A673 (cell line): ENCODE measurements at regions of chr22 and their contacts with region 1.

Region 1: DNA sequence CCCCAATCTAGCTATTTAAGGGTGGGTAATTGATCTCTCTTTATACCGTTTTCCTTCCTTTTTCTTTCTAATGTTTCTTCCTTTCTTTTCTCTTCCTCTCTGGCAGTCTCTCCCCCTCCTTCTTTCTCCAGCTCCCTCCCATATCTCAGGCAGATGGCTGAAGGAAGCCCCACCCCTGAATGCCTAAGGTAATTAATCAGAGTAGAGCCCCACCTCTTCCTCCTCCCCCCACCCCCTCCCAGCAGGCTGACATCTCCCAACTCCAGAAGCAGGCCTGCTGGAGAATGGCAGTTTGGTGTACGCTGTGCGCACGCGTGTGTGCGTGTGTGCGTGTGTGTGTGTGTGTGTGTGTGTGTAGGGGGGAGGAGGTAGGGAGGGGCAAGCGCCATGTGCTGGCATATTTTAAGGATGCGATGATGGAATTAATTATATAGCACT is 122.6 kb downstream of the APOL5 start:
- DNase-seq: peak; percentile 99
- H3K4me3 ChIP-seq: peak overlapping the region; percentile 60
- H3K27ac ChIP-seq: peak overlapping the region; percentile 64
- H3K4me1 ChIP-seq: peaks cover 57% of the 10 kb centered on the region
- H3K27me3 ChIP-seq: no peaks in the 10 kb centered on the region
- CTCF ChIP-seq: no peak

Region 2: GRCh38 chr22:35467681-35468434 is 372.5 kb before region 1 on chr22:
- CTCF ChIA-PET with region 1: no interaction called
- POLR2A ChIA-PET with region 1: no interaction called
- intact Hi-C with region 1: no loop called
- DNase-seq: no peak
- H3K4me3 ChIP-seq: no peak overlapping the region
- H3K27ac ChIP-seq: no peak overlapping the region
- H3K4me1 ChIP-seq: no peaks in the 10 kb centered on the region
- H3K27me3 ChIP-seq: no peaks in the 10 kb centered on the region
- CTCF ChIP-seq: no peak

Region 3: GRCh38 chr22:35627264-35628041 is 212.9 kb before region 1 on chr22:
- CTCF ChIA-PET with region 1: interaction called, 3 read pairs
- POLR2A ChIA-PET with region 1: no interaction called
- intact Hi-C with region 1: loop called (anchors 5 kb)
- DNase-seq: peak; percentile 90
- H3K4me3 ChIP-seq: peak overlapping the region; percentile 49
- H3K27ac ChIP-seq: peak overlapping the region; percentile 45
- H3K4me1 ChIP-seq: peaks cover 18% of the 10 kb centered on the region
- H3K27me3 ChIP-seq: no peaks in the 10 kb centered on the region
- CTCF ChIP-seq: peak; percentile 75

Region 4: DNA sequence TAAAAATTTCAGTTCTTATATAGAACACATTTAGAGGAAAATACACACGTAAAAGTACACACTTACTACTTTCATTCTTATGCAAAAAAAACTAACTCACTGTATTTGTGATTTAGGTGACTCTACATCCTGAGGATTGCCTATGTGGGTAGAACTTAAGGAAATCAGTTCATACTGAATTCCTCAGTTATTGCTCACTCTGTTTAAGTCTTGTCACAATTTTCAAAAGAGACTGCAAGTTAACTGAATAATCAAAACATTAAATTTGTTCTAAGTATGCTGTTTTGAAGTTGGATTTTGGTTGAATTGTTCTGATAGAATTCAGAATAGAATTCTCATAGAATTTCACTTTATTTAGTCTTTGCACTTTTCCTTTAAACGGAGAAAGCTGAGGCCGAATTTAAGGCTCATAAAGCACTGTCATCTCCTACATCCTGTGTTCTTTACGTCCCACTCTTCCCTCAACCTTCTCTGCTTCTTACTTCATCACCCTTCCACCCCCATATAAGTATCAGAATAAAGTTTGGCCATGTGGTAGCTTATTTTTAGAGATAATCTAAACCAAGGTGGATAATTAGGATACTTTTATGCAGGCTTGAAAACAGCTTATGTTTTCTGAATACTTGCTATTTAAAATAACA is 62.9 kb before region 1 on chr22:
- CTCF ChIA-PET with region 1: no interaction called
- POLR2A ChIA-PET with region 1: no interaction called
- intact Hi-C with region 1: loop called (anchors 5 kb)
- DNase-seq: no peak
- H3K4me3 ChIP-seq: no peak overlapping the region
- H3K27ac ChIP-seq: peak overlapping the region; percentile 26
- H3K4me1 ChIP-seq: peaks cover 14% of the 10 kb centered on the region
- H3K27me3 ChIP-seq: no peaks in the 10 kb centered on the region
- CTCF ChIP-seq: no peak

Region 5: DNA sequence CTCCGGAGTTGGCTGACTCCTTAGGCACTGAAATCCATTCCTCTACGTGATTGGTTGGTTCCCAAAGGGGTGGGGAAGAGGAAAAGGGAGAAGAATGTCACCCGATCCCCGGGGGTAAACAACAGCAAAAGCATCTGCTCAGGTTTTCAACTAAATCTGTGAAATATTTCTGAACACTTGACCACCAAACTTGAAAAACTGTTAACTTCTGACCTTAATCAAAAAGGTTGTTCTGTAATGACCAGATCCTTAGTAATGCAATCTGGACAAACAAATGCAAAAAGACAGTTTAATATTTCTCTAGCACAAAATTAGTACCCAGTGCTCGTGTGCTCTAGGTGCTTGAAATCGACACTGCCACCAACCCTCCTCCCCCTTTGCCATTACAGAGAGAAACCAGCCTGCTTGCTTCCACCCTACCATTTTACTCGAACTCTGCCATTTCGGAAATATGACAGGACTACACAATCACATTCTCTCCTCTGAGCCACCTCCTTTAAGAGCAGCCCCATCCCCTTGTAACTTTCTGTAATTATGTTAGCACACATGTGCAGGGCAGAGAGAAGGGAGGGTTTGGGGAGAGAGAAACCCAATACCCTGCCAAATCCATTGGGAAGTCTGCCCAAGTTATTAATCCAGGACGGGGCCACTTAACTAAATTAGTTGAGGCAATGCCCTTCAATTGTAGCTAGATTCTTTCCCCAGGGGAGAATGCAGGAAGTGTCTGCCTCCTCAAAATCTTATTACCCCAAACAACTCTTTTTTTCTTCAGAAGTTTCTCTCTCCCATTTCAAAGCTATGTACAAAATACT is 74.5 kb after region 1 on chr22:
- CTCF ChIA-PET with region 1: no interaction called
- POLR2A ChIA-PET with region 1: interaction called, 3 read pairs
- intact Hi-C with region 1: loop called (anchors 2 kb)
- DNase-seq: peak; percentile 98
- H3K4me3 ChIP-seq: peak overlapping the region; percentile 50
- H3K27ac ChIP-seq: peak overlapping the region; percentile 95
- H3K4me1 ChIP-seq: peaks cover 85% of the 10 kb centered on the region
- H3K27me3 ChIP-seq: no peaks in the 10 kb centered on the region
- CTCF ChIP-seq: no peak